CD4-positive, alpha-beta T cell (primary cell): ENCODE measurements at regions of chr1 and their contacts with region 1.

Region 1: GRCh38 chr1:3012456-3013291 is 8.6 kb upstream of the ACTRT2 start:
- DNase-seq: peak in 13 of 14 experiments; percentile 27 to 71 (median 46)
- ATAC-seq: peak; percentile 54
- H3K4me3 ChIP-seq: no peak overlapping the region
- H3K4me3 Mint-ChIP-seq: no peak overlapping the region
- H3K27ac ChIP-seq: no peak overlapping the region
- H3K27ac Mint-ChIP-seq: no peak overlapping the region
- H3K4me1 ChIP-seq: peaks cover 6% of the 10 kb centered on the region
- H3K4me1 Mint-ChIP-seq: no peaks in the 10 kb centered on the region
- H3K27me3 ChIP-seq: peaks cover 0 to 8% of the 10 kb centered on the region in 2 experiments
- H3K27me3 Mint-ChIP-seq: peaks cover 19% of the 10 kb centered on the region
- CTCF ChIP-seq: peak; percentile 84

Region 2: DNA sequence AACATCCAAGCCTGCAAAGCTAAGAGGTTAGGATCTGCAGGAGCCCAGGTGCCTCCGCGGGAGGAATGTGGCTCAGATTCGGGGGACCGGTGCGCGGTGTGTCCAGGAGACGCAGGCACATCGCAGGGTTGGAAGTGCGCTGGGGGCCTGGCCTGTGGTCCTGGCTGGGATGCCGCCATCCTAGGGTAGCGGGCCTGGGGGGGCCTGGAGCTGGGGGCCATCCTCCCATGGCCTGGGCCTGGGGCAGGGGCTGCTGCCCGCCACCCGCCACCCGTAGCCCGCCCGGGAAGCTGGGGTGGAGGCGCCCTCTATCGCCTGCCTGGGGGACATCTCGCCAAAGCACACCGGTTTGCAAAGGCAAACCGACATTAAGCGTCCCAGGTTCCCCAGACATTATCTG is 271.2 kb after region 1 on chr1:
- CTCF ChIA-PET with region 1: interaction called, 3 read pairs
- POLR2A ChIA-PET with region 1: no interaction called
- intact Hi-C with region 1: loop called in 1 of 2 experiments (anchors 5 kb)
- DNase-seq: peak in 1 of 14 experiments; percentile 14
- ATAC-seq: no peak
- H3K4me3 ChIP-seq: no peak overlapping the region
- H3K4me3 Mint-ChIP-seq: no peak overlapping the region
- H3K27ac ChIP-seq: no peak overlapping the region
- H3K27ac Mint-ChIP-seq: no peak overlapping the region
- H3K4me1 ChIP-seq: no peaks in the 10 kb centered on the region
- H3K4me1 Mint-ChIP-seq: no peaks in the 10 kb centered on the region
- H3K27me3 ChIP-seq: peaks cover 0 to 2% of the 10 kb centered on the region in 2 experiments
- H3K27me3 Mint-ChIP-seq: peaks cover 4% of the 10 kb centered on the region
- CTCF ChIP-seq: no peak

Region 3: DNA sequence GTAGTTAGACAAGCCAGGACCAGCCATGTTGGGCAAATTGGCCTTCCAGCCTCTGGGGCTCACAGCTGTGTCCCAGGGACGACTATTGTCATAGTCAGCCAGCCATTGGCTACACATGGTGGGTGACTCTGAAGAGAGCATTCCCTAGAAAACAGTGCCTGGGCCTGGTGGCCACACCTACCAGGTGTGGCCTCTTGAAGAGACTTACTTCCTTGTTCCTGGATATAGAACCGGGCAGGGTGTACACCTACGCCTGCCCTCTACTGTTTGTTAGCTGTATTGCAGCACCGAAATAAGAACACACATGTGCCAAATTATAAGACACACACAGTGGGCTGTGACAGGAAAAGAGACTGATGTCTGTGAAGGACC is 307.2 kb after region 1 on chr1:
- CTCF ChIA-PET with region 1: no interaction called
- POLR2A ChIA-PET with region 1: no interaction called
- intact Hi-C with region 1: loop called (anchors 1 to 2 kb)
- DNase-seq: peak in 4 of 14 experiments; percentile 26 to 57 (median 44)
- ATAC-seq: no peak
- H3K4me3 ChIP-seq: no peak overlapping the region
- H3K4me3 Mint-ChIP-seq: no peak overlapping the region
- H3K27ac ChIP-seq: no peak overlapping the region
- H3K27ac Mint-ChIP-seq: peak overlapping the region; percentile 27
- H3K4me1 ChIP-seq: peaks cover 11% of the 10 kb centered on the region
- H3K4me1 Mint-ChIP-seq: peaks cover 13% of the 10 kb centered on the region
- H3K27me3 ChIP-seq: no peaks in the 10 kb centered on the region
- H3K27me3 Mint-ChIP-seq: no peaks in the 10 kb centered on the region
- CTCF ChIP-seq: peak; percentile 42